ENCODE measurements at regions of chr6 and their contacts with region 1.

Region 1: DNA sequence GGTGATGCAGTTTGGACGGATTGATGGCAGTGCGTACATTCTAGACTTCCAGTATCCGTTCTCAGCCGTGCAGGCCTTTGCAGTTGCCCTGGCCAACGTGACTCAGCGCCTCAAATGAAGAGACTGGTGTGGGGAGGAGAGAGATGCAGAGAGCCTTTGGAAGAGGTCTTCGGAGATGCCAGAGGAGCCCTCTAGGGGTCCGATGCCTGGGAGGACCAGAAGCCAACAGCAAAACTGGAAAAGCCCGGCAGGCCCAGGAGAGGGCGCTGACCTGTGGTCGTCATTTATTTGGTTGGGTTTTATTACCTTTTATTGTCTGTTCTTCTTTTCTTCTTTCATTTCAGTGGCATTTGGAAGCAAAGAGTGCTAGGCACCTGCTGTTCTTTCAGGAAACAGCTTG is 53.3 kb upstream of the TMEM181 start:
- DNase-seq: peak; percentile 70 to 74
- H3K4me3 ChIP-seq: no peak overlapping the region
- H3K27ac ChIP-seq: no peak overlapping the region
- H3K4me1 ChIP-seq: no peaks in the 10 kb centered on the region
- H3K27me3 ChIP-seq: no peaks in the 10 kb centered on the region
- CTCF ChIP-seq: peak; percentile 77 to 99 (median 92)
- EP300 ChIP-seq: no peak
- POLR2A ChIP-seq: no peak
- RAD21 ChIP-seq: peak; percentile 68 to 77

Region 2: GRCh38 chr6:158524311-158524710 is 17.7 kb after region 1 on chr6:
- CTCF ChIA-PET with region 1: interaction called, 24 read pairs
- POLR2A ChIA-PET with region 1: interaction called, 3 read pairs
- DNase-seq: no peak
- H3K4me3 ChIP-seq: no peak overlapping the region
- H3K27ac ChIP-seq: no peak overlapping the region
- H3K4me1 ChIP-seq: no peaks in the 10 kb centered on the region
- H3K27me3 ChIP-seq: no peaks in the 10 kb centered on the region
- CTCF ChIP-seq: no peak
- EP300 ChIP-seq: no peak
- POLR2A ChIP-seq: no peak
- RAD21 ChIP-seq: no peak

Measured in H1 (cell line).